ENCODE measurements at regions of chr5 and their contacts with region 1.

Region 1: DNA sequence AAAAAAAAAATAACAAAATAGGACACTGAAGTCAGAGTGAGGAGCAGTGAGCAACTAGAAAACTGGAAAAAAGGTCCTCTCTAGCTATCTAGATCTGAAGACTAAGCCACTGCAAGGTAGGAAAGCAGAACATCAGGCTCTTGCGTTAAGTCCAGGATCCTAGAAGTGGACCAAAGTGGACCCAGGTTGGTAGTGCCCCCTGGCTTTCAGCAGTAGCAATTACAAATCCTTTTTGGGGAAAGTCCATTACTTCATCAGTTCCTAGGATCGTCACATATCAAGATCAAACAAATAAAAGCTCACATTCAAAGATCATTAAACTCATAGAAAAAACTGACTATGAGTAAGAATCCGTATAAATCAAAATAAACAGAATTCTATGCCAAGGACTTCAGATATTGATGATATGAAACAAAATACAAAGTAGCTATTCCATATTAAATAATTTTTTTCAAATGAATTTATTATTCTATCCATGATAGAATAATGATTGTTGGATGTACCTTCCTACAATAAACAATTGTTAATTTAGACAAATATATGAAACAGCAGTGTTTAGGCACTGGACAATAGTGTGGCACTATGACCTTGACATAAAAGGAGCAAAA is 6.5 kb upstream of the RICTOR start:
- DNase-seq: peak in 4 of 9 experiments; percentile 15 to 76 (median 46)
- ATAC-seq: peak; percentile 52
- H3K4me3 ChIP-seq: no peak overlapping the region
- H3K4me3 Mint-ChIP-seq: no peak overlapping the region
- H3K27ac ChIP-seq: no peak overlapping the region
- H3K27ac Mint-ChIP-seq: no peak overlapping the region
- H3K4me1 ChIP-seq: no peaks in the 10 kb centered on the region
- H3K4me1 Mint-ChIP-seq: peaks cover 7% of the 10 kb centered on the region
- H3K27me3 ChIP-seq: peaks cover 18 to 19% of the 10 kb centered on the region in 2 experiments
- H3K27me3 Mint-ChIP-seq: peaks cover 53% of the 10 kb centered on the region
- CTCF ChIP-seq: peak; percentile 69

Region 2: DNA sequence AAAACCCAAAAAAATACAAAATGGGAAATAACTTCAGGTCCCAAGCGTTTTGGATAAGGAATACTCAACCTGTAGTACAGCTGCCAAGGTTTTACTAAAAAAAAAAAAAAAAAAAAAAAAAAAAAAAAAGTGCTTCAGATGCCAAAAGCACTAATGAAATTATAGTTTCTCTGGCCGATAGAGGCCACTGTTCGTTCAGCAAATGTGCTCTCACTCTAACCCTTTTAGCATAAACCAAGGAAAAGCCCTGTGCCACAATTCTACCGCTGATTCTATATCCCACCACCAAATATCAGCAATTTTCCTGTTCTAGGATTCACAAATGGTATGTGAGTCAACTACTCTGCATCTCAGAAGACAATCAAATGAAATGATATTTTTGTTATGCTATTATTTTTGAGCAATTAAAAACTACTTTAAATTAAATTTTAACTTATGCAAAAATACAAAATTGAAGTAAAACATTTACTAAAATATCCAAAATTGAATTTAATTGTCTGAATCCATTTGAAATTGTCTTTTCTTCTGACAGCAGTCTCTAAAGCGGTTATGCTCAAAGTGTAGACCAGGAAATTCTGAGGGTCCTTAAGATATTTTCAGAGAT is 86.3 kb before region 1 on chr5:
- CTCF ChIA-PET with region 1: interaction called, 11 read pairs
- POLR2A ChIA-PET with region 1: no interaction called
- intact Hi-C with region 1: loop called (anchors 1 to 2 kb)
- DNase-seq: peak in 5 of 9 experiments; percentile 15 to 76 (median 41)
- ATAC-seq: peak; percentile 74
- H3K4me3 ChIP-seq: no peak overlapping the region
- H3K4me3 Mint-ChIP-seq: no peak overlapping the region
- H3K27ac ChIP-seq: no peak overlapping the region
- H3K27ac Mint-ChIP-seq: no peak overlapping the region
- H3K4me1 ChIP-seq: no peaks in the 10 kb centered on the region
- H3K4me1 Mint-ChIP-seq: peaks cover 27% of the 10 kb centered on the region
- H3K27me3 ChIP-seq: no peaks in the 10 kb centered on the region
- H3K27me3 Mint-ChIP-seq: no peaks in the 10 kb centered on the region
- CTCF ChIP-seq: peak; percentile 39

Region 3: DNA sequence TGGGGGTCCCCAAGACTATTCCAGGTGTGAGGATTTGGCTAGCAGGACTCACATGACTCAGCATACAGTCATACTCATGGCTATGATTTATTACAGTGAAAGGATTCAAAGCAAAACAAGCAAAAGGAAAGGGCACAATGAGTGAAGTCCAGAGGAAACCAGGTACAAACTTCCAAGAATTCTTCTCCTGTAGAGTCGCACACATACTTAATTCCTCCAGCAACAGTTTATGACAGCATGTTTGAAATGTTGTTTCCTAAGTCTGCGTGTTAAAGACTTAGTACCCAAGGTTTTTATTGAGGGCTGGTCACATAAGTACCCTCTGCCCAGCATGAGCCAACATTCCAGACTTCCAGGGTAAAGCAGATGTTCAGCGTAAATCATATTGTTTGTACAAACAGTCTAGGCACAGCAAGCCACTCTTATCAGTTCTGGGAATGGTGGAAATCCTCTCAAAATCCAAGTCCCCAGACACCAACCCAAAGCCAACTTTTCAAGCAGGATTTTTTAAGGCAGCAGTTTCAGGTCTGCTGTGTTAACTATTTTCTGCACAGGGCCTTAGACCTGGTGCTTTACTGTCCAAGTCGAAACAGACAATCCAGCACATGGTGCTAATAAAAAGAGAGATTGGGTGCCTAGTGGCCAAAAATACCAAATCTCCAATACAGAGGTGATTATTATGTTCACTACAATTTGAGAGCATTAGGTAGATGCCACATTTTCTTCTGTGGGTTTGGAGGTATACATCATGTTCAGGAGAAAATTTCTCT is 12.1 kb after region 1 on chr5:
- CTCF ChIA-PET with region 1: interaction called, 18 read pairs
- POLR2A ChIA-PET with region 1: no interaction called
- intact Hi-C with region 1: no loop called
- DNase-seq: no peak
- ATAC-seq: no peak
- H3K4me3 ChIP-seq: no peak overlapping the region
- H3K4me3 Mint-ChIP-seq: no peak overlapping the region
- H3K27ac ChIP-seq: no peak overlapping the region
- H3K27ac Mint-ChIP-seq: no peak overlapping the region
- H3K4me1 ChIP-seq: no peaks in the 10 kb centered on the region
- H3K4me1 Mint-ChIP-seq: peaks cover 3% of the 10 kb centered on the region
- H3K27me3 ChIP-seq: no peaks in the 10 kb centered on the region
- H3K27me3 Mint-ChIP-seq: no peaks in the 10 kb centered on the region
- CTCF ChIP-seq: no peak

Region 4: DNA sequence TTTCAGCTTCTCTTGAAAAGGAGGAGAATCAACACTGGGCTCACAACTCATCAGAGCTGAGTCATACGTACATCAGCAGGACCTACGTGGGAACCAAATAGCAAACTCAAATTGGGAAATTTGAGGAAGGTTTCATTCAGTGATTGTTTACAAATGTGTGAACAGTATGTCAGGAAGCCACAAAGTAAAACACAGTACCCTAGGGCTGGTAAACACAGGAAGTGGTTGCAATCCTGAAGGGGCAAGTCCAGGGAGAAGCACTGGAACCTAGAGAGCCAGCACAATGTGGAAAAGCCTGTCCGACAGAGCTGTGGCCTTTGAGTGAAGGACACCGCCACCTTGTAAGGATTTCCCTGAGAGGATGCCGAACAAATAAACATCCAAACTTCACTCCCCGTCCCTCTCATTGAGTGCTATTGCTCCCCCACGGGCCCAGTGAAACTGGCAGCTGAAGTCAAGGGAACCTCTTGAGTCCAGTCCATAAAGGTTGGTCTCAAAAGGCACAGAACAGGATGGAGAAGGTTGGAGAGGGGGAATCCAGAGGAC is 20.2 kb after region 1 on chr5:
- CTCF ChIA-PET with region 1: interaction called, 19 read pairs
- POLR2A ChIA-PET with region 1: interaction called, 5 read pairs
- intact Hi-C with region 1: loop called in 1 of 2 experiments (anchors 2 kb)
- DNase-seq: peak in 2 of 9 experiments; percentile 10 to 43
- ATAC-seq: no peak
- H3K4me3 ChIP-seq: no peak overlapping the region
- H3K4me3 Mint-ChIP-seq: no peak overlapping the region
- H3K27ac ChIP-seq: peak overlapping the region in 1 of 2 experiments; percentile 47
- H3K27ac Mint-ChIP-seq: peak overlapping the region; percentile 89
- H3K4me1 ChIP-seq: peaks cover 15% of the 10 kb centered on the region
- H3K4me1 Mint-ChIP-seq: peaks cover 36% of the 10 kb centered on the region
- H3K27me3 ChIP-seq: no peaks in the 10 kb centered on the region
- H3K27me3 Mint-ChIP-seq: no peaks in the 10 kb centered on the region
- CTCF ChIP-seq: no peak

Region 5: GRCh38 chr5:39274398-39275085 is 193.8 kb after region 1 on chr5:
- CTCF ChIA-PET with region 1: no interaction called
- POLR2A ChIA-PET with region 1: no interaction called
- intact Hi-C with region 1: no loop called
- DNase-seq: peak in 2 of 9 experiments; percentile 55 to 77
- ATAC-seq: peak; percentile 64
- H3K4me3 ChIP-seq: peak overlapping the region; percentile 40 to 42
- H3K4me3 Mint-ChIP-seq: peak overlapping the region; percentile 86
- H3K27ac ChIP-seq: peak overlapping the region; percentile 54 to 87
- H3K27ac Mint-ChIP-seq: peak overlapping the region; percentile 98
- H3K4me1 ChIP-seq: peaks cover 41% of the 10 kb centered on the region
- H3K4me1 Mint-ChIP-seq: peaks cover 58% of the 10 kb centered on the region
- H3K27me3 ChIP-seq: no peaks in the 10 kb centered on the region
- H3K27me3 Mint-ChIP-seq: no peaks in the 10 kb centered on the region
- CTCF ChIP-seq: no peak

Region 6: GRCh38 chr5:39314591-39314990 is 233.9 kb after region 1 on chr5:
- CTCF ChIA-PET with region 1: no interaction called
- POLR2A ChIA-PET with region 1: no interaction called
- intact Hi-C with region 1: no loop called
- DNase-seq: no peak
- ATAC-seq: no peak
- H3K4me3 ChIP-seq: no peak overlapping the region
- H3K4me3 Mint-ChIP-seq: no peak overlapping the region
- H3K27ac ChIP-seq: no peak overlapping the region
- H3K27ac Mint-ChIP-seq: no peak overlapping the region
- H3K4me1 ChIP-seq: no peaks in the 10 kb centered on the region
- H3K4me1 Mint-ChIP-seq: no peaks in the 10 kb centered on the region
- H3K27me3 ChIP-seq: no peaks in the 10 kb centered on the region
- H3K27me3 Mint-ChIP-seq: peaks cover 5% of the 10 kb centered on the region
- CTCF ChIP-seq: no peak

Measured in CD8-positive, alpha-beta T cell (primary cell).